ENCODE measurements at regions of chr15 and their contacts with region 1.

Region 1: DNA sequence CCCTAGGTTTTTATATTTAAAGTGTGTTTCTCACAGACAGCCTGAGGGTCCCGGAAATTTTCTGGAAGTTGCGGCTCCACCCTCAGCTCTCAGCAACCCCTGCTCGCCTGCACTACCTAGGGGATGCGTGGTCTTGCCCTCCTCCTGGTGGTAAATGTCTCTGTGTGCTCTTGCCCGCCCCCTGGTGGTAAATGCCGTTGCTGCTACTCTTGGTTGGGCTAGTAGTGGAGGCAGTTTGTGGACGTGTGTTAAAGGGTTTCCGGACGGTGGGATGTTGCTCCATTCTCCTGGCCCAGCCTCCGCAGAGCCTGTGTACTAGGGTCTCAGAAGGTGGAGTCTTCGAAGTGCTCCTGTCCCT is 27.4 kb downstream of the STOML1 start:
- DNase-seq: peak; percentile 92
- ATAC-seq: peak; percentile 87
- H3K4me3 Mint-ChIP-seq: peak overlapping the region; percentile 35
- H3K27ac Mint-ChIP-seq: peak overlapping the region; percentile 73
- H3K4me1 Mint-ChIP-seq: peaks cover 42% of the 10 kb centered on the region
- H3K27me3 Mint-ChIP-seq: no peaks in the 10 kb centered on the region

Region 2: DNA sequence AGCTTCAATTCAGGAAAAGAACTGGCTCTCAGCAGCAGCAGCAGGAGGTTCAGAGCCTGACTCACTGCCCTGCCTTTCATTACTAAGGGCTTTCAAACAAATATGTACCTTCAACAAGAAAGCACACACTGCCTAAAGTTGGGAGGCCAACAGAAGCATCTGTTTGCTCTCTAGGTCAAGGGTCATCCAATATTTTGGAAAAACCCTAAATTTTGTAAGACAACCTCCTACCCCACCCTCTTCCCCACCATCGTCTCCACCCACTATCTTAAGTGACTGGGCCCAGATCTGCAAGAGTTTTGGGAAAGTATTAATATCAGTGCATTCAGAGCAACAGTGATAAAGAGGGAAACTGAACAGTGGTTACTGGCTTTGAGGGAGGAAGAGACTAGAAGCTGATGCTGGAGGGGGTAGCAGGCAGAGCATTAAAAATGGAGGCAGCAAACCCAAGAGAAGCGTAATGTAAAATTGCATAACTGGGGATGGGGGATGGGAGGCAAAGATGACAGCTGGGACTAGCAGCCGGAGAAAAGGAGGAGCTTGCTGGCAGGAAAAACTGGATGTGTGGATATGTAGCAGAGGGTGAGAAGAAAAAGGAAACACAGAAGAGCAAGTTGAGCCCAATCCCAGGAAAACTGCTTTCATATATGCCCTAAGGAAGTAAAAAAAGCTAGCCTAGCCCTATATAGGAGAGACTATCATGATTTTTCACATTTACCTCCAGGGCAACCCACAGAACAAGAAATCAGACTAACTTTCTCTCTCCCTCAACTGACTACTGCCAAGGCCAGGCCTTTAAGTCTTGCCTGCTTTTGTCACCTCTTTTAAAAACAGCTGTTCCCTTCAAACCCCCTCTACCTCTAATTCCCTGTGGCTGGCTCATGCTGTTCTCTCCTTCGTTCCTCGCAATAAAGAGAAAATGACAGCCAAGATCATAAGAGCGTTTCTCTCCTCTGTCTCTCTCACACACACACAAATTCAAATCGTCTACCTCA is 363.0 kb before region 1 on chr15:
- CTCF ChIA-PET with region 1: no interaction called
- POLR2A ChIA-PET with region 1: no interaction called
- DNase-seq: no peak
- ATAC-seq: no peak
- H3K4me3 Mint-ChIP-seq: no peak overlapping the region
- H3K27ac Mint-ChIP-seq: no peak overlapping the region
- H3K4me1 Mint-ChIP-seq: peaks cover under 1% of the 10 kb centered on the region
- H3K27me3 Mint-ChIP-seq: no peaks in the 10 kb centered on the region

Region 3: DNA sequence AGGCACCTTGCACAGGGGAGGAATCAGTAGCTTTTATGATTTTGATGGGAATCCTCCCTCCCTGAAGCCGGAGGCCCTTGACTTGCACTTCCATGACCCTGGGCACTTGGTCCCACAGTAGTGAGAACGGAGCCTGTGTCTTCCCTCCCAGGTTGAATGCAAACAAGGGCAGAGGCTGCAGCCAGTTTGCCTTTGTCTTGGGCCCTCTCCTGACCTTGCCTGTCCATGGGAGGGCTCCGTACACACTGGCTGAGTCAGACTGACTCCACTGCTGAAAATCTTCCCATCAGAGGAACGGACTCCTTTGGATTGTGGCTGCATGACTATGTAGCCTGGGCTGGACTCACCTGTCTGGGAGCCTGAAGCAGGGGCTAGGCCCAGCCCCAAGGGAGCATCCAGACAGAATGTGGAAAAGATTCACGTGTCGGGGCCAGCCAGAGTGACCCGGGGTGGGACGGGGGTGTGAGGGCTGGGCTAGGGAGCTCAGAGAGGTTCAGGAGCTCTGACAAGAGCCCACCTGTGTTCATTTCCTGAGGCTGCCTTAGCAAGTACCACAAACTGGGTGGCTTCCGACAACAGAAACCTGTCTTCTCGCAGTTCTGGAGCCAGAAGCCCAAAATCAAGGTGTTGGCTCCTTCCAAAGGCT is 81.8 kb before region 1 on chr15:
- CTCF ChIA-PET with region 1: no interaction called
- POLR2A ChIA-PET with region 1: no interaction called
- DNase-seq: no peak
- ATAC-seq: no peak
- H3K4me3 Mint-ChIP-seq: no peak overlapping the region
- H3K27ac Mint-ChIP-seq: no peak overlapping the region
- H3K4me1 Mint-ChIP-seq: no peaks in the 10 kb centered on the region
- H3K27me3 Mint-ChIP-seq: peaks cover 16% of the 10 kb centered on the region

Region 4: DNA sequence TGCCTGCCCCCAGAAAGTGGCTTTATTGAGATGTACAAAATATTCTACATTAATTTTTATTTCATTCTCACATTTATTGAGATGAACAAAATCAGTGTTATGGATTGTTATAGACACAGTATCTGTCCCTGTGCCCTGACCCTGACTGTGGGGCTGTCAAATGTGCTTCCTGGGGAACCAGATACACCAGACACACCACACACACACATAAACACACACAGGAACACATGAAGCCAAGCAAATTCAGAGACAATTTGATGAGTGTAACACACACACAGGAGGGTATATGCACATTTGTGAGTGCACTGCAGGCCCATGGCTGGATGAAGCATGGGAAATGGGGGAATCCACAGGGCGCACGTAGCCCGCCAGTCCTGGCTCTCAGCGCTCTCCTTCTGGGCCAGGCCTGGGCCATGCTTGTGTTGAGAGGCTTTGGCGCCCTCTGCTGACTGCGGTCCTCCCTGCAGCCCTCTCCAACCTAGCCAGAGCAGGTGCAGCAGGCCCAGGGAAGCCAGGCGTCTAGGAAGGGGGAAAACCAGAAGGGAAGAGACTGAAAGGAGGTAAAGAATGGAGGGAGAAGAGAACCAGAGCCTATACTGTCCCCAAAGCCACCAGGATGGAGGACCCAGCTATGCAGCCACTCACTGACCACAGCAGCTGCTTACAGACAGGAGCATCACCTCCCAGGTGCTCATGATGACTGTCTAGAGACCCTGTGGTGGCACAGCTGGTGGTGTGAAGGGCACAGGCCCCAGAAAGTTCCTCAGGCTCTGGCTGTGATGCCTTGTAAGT is 56.5 kb before region 1 on chr15:
- CTCF ChIA-PET with region 1: interaction called, 16 read pairs
- POLR2A ChIA-PET with region 1: no interaction called
- DNase-seq: peak; percentile 87
- ATAC-seq: peak; percentile 99
- H3K4me3 Mint-ChIP-seq: no peak overlapping the region
- H3K27ac Mint-ChIP-seq: peak overlapping the region; percentile 37
- H3K4me1 Mint-ChIP-seq: peaks cover 27% of the 10 kb centered on the region
- H3K27me3 Mint-ChIP-seq: no peaks in the 10 kb centered on the region

Region 5: GRCh38 chr15:73950831-73951561 is 13.7 kb before region 1 on chr15:
- CTCF ChIA-PET with region 1: interaction called, 310 read pairs
- POLR2A ChIA-PET with region 1: interaction called, 3 read pairs
- DNase-seq: peak; percentile 88
- ATAC-seq: peak; percentile 94
- H3K4me3 Mint-ChIP-seq: peak overlapping the region; percentile 48
- H3K27ac Mint-ChIP-seq: peak overlapping the region; percentile 89
- H3K4me1 Mint-ChIP-seq: peaks cover 22% of the 10 kb centered on the region
- H3K27me3 Mint-ChIP-seq: no peaks in the 10 kb centered on the region

Region 6: GRCh38 chr15:73991726-73992593 is 27.2 kb after region 1 on chr15 and contains the start of gene STOML1:
- CTCF ChIA-PET with region 1: interaction called, 14 read pairs
- POLR2A ChIA-PET with region 1: interaction called, 15 read pairs
- DNase-seq: peak; percentile 94
- ATAC-seq: peak; percentile 79
- H3K4me3 Mint-ChIP-seq: peak within 1 kb of the TSS; percentile 81
- H3K27ac Mint-ChIP-seq: peak within 1 kb of the TSS; percentile 72
- H3K4me1 Mint-ChIP-seq: peaks cover 52% of the 10 kb centered on the region
- H3K27me3 Mint-ChIP-seq: no peaks in the 10 kb centered on the region
- total RNA-seq, gene STOML1: 10.8 to 10.9 TPM

Region 7: GRCh38 chr15:74053941-74054529 is 89.3 kb after region 1 on chr15:
- CTCF ChIA-PET with region 1: interaction called, 177 read pairs
- POLR2A ChIA-PET with region 1: no interaction called
- DNase-seq: peak; percentile 84
- ATAC-seq: peak; percentile 98
- H3K4me3 Mint-ChIP-seq: no peak overlapping the region
- H3K27ac Mint-ChIP-seq: peak overlapping the region; percentile 20
- H3K4me1 Mint-ChIP-seq: peaks cover 12% of the 10 kb centered on the region
- H3K27me3 Mint-ChIP-seq: peaks cover 8% of the 10 kb centered on the region